ENCODE measurements at regions of chr20 and their contacts with region 1.

Region 1: GRCh38 chr20:561437-562231 is 18.0 kb upstream of the CSNK2A1 start:
- DNase-seq: peak; percentile 74
- H3K4me3 ChIP-seq: no peak overlapping the region
- H3K27ac ChIP-seq: no peak overlapping the region
- H3K4me1 ChIP-seq: peaks cover 3% of the 10 kb centered on the region
- CTCF ChIP-seq: peak; percentile 95

Region 2: GRCh38 chr20:645318-646106 is 83.9 kb after region 1 on chr20:
- CTCF ChIA-PET with region 1: interaction called, 6 read pairs
- POLR2A ChIA-PET with region 1: no interaction called
- intact Hi-C with region 1: loop called (anchors 1 kb)
- DNase-seq: peak; percentile 76
- H3K4me3 ChIP-seq: no peak overlapping the region
- H3K27ac ChIP-seq: no peak overlapping the region
- H3K4me1 ChIP-seq: peaks cover 3% of the 10 kb centered on the region
- CTCF ChIP-seq: peak; percentile 94

Region 3: DNA sequence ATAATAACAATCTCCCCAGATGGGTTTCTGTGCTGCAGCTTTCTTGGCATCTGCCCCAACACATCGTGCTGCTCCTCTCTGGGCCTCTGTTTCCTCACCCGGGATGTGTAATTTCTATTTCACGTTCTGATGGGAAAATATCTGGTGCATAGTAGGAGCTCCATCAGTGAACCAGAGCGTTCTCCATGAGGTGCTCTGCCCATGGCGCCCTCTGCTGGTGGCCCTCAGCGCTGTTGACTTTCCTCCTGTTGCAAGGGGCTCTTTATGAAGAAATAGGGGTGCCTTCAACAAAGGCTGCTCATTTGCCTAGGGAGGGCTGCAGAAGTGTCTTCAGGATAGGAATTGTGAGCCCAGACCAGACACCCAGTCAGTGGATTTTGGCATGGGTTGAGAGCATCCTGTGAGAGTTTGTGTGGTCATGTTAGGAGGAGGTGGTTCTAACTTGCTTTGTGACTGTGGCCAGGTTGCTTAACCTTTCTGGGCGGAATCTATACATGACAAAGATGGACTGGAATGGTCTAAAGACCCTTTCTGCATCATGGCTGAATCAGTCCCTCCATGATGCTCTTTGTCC is 105.8 kb after region 1 on chr20:
- CTCF ChIA-PET with region 1: no interaction called
- POLR2A ChIA-PET with region 1: no interaction called
- intact Hi-C with region 1: loop called (anchors 5 kb)
- DNase-seq: peak; percentile 55
- H3K4me3 ChIP-seq: no peak overlapping the region
- H3K27ac ChIP-seq: no peak overlapping the region
- H3K4me1 ChIP-seq: peaks cover 13% of the 10 kb centered on the region
- CTCF ChIP-seq: peak; percentile 95

Region 4: DNA sequence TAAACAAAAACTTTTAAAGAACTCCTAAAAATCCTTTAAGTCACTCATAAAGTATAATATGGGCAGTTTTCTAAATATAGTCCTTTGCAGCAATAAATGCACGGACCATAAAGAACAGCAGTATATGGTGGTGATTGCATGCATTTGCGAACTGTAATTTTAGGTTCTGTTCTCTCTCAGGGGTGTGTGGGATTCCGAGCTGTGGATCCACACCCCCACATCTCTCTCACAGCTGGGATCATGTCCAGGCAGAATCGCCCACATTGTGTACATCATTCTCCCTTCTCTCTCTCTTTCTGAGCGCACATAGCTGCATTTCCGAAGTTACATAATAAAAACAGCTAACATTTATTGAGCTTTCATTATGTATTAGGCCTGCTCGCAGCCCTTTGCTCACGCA is 178.1 kb after region 1 on chr20:
- CTCF ChIA-PET with region 1: no interaction called
- POLR2A ChIA-PET with region 1: no interaction called
- intact Hi-C with region 1: loop called (anchors 1 kb)
- DNase-seq: no peak
- H3K4me3 ChIP-seq: no peak overlapping the region
- H3K27ac ChIP-seq: no peak overlapping the region
- H3K4me1 ChIP-seq: no peaks in the 10 kb centered on the region
- CTCF ChIP-seq: no peak